ENCODE measurements at regions of chr7 and their contacts with region 1.

Region 1: DNA sequence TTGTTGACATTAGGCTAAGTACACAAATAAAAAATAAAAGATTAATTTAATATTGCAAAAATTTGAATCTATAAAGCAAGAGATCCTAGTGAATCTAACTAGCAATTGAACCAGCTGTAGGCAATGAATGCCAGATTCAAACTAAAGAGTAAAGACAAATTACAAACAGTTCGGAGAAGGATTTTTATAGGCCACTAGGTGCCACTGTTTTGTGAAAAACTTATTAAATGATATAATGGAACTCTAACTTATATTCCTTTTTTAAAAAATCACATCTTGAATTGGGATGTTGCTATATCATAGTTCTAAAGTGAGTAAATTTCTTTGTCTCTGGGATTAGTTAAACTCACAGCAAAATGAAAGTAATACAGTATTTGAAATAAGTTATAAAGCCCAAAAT is 39.1 kb upstream of the GNAI1 start:
- DNase-seq: peak in 1 of 9 experiments; percentile 19
- ATAC-seq: no peak
- H3K4me3 ChIP-seq: no peak overlapping the region
- H3K4me3 Mint-ChIP-seq: no peak overlapping the region
- H3K27ac ChIP-seq: no peak overlapping the region
- H3K27ac Mint-ChIP-seq: no peak overlapping the region
- H3K4me1 ChIP-seq: no peaks in the 10 kb centered on the region
- H3K4me1 Mint-ChIP-seq: no peaks in the 10 kb centered on the region
- H3K27me3 ChIP-seq: no peaks in the 10 kb centered on the region
- H3K27me3 Mint-ChIP-seq: no peaks in the 10 kb centered on the region
- CTCF ChIP-seq: no peak

Region 2: DNA sequence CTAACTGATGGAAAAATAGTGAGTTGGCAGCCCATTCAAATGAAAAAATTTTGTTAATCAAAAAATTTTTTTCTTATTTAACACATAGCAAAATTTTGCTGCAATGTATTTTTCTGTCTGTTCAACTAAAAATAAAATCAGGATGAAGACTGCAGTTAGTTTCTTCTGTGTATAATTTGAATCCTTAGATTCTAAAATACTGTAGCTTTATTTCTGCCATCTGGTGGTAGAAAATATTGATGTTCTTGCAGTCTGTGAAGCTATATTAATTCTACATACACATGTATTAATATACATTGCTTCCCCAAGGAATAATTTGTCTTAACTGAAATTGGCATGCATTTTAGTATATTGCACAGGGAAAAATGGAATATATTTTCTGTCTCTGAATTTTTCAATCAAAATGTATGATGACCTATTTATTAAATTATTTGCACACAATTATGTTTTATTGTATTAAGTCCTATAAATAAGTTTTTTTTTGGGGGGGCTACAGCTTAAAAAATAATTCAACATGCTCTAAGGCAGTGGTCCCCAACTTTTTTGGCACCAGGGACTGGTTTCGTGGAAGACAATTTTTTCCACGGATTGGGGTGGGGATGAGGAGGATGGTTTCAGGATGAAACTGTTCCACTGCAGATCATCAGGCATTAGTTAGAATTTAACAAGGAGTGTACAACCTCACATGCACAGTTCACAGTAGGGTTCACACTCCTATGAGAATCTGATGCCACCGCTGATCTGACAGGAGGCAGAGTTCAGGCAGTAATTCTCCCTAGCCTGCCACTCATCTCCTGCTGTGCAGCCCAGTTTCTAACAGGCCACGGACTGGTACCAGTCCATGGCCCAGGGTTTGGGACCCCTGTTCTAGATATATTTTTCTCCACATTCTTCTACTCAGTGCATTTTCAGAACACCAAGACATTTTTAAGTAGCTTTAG is 297.0 kb after region 1 on chr7:
- CTCF ChIA-PET with region 1: interaction called, 6 read pairs
- POLR2A ChIA-PET with region 1: no interaction called
- intact Hi-C with region 1: loop called (anchors 1 kb)
- DNase-seq: peak in 1 of 9 experiments; percentile 34
- ATAC-seq: no peak
- H3K4me3 ChIP-seq: no peak overlapping the region
- H3K4me3 Mint-ChIP-seq: no peak overlapping the region
- H3K27ac ChIP-seq: no peak overlapping the region
- H3K27ac Mint-ChIP-seq: no peak overlapping the region
- H3K4me1 ChIP-seq: no peaks in the 10 kb centered on the region
- H3K4me1 Mint-ChIP-seq: no peaks in the 10 kb centered on the region
- H3K27me3 ChIP-seq: no peaks in the 10 kb centered on the region
- H3K27me3 Mint-ChIP-seq: no peaks in the 10 kb centered on the region
- CTCF ChIP-seq: peak; percentile 40

Region 3: DNA sequence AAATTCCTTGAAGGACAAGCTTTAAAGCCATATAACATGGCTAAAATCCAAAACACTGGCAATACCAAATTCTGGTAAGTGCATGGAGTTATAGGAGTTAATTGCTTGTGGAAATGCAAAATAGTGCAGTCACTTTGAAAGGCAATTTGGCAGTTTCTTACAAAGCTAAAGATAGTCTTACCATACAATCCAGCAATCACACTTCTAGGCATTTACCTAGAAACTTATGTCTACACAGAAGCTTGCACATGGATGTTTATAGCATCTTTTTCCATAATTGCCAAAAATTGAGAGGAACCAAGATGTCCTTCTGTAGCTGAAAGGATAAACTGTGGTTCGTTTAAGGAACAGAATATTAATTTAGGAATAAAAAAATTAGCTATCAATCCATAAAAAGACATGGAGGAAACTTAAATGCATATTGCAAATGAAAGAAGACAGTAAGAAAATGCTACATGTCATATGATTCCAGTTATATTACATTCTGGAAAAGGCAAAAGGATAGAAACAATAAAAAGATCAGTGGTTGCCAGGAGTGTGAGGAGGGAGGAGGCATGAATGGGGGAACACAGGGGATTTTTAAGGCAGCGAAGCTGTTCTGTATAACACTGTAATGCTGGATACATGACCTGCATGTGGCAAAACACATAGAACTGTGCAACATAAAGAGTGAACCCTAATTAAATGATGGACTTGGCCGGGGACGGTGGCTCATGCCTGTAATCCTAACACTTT is 364.4 kb after region 1 on chr7:
- CTCF ChIA-PET with region 1: no interaction called
- POLR2A ChIA-PET with region 1: no interaction called
- intact Hi-C with region 1: loop called in 1 of 2 experiments (anchors 5 kb)
- DNase-seq: no peak
- ATAC-seq: no peak
- H3K4me3 ChIP-seq: no peak overlapping the region
- H3K4me3 Mint-ChIP-seq: no peak overlapping the region
- H3K27ac ChIP-seq: no peak overlapping the region
- H3K27ac Mint-ChIP-seq: no peak overlapping the region
- H3K4me1 ChIP-seq: no peaks in the 10 kb centered on the region
- H3K4me1 Mint-ChIP-seq: no peaks in the 10 kb centered on the region
- H3K27me3 ChIP-seq: no peaks in the 10 kb centered on the region
- H3K27me3 Mint-ChIP-seq: peaks cover 3% of the 10 kb centered on the region
- CTCF ChIP-seq: no peak

Region 4: GRCh38 chr7:80659120-80660055 is 563.8 kb after region 1 on chr7:
- CTCF ChIA-PET with region 1: no interaction called
- POLR2A ChIA-PET with region 1: no interaction called
- intact Hi-C with region 1: loop called in 1 of 2 experiments (anchors 1 kb)
- DNase-seq: peak in 1 of 9 experiments; percentile 34
- ATAC-seq: peak; percentile 52
- H3K4me3 ChIP-seq: no peak overlapping the region
- H3K4me3 Mint-ChIP-seq: no peak overlapping the region
- H3K27ac ChIP-seq: no peak overlapping the region
- H3K27ac Mint-ChIP-seq: no peak overlapping the region
- H3K4me1 ChIP-seq: no peaks in the 10 kb centered on the region
- H3K4me1 Mint-ChIP-seq: peaks cover 2% of the 10 kb centered on the region
- H3K27me3 ChIP-seq: no peaks in the 10 kb centered on the region
- H3K27me3 Mint-ChIP-seq: no peaks in the 10 kb centered on the region
- CTCF ChIP-seq: peak; percentile 69